ENCODE measurements at regions of chr5 and their contacts with region 1.

Region 1: GRCh38 chr5:176739461-176740051 is 70.8 kb upstream of the UNC5A start:
- DNase-seq: peak in 1 of 2 experiments; percentile 70
- H3K4me3 ChIP-seq: no peak overlapping the region
- H3K27ac ChIP-seq: no peak overlapping the region
- H3K4me1 ChIP-seq: peaks cover 7 to 33% (median 24%) of the 10 kb centered on the region in 4 experiments
- H3K27me3 ChIP-seq: peaks cover 0 to 25% (median 12%) of the 10 kb centered on the region in 4 experiments; a peak in 6 of 7 replicates
- CTCF ChIP-seq: no peak
- EP300 ChIP-seq: no peak
- POLR2A ChIP-seq: no peak
- RAD21 ChIP-seq: no peak

Region 2: DNA sequence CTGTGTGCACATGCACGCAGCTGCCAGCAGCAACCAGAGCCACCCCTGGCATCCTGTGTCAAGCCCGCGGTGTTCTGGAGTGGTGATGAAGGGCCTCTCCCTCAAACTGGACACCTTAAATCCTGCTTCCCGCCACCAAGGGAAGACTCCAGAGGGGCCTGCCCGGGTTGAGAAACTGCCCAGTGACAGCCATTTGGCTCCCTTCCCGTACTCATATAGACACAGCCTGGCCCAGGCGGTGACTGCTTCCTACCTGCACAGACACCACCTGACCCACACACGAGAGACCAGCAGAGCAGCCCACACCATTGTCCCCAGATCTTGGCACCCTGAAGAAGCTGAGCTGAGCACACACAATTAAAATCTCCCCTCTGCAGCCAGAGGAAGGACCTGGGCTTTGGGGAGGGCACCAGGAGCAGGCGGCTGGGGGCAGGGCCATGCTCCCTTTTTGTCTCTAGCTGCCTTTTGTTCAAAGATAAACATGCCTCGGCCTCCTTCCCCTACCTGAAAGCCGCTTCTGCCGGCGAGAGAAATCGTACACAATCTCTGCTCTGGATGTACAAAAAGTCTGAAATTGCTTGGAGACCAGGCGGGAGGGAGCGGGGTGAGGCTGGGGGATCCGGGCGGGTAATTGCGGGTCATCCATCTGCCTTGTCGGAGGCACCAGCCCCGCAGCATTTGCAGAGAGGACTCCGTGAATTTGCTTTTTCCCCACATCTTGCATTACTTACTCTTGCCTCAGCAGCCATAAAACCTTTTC is 13.9 kb before region 1 on chr5:
- CTCF ChIA-PET with region 1: interaction called, 54 read pairs
- POLR2A ChIA-PET with region 1: interaction called, 10 read pairs
- DNase-seq: peak in 1 of 2 experiments; percentile 57
- H3K4me3 ChIP-seq: no peak overlapping the region
- H3K27ac ChIP-seq: no peak overlapping the region
- H3K4me1 ChIP-seq: peaks cover 0 to 24% (median 10%) of the 10 kb centered on the region in 4 experiments; a peak in 5 of 7 replicates
- H3K27me3 ChIP-seq: peaks cover 0 to 6% (median 4%) of the 10 kb centered on the region in 4 experiments; a peak in 3 of 7 replicates
- CTCF ChIP-seq: no peak
- EP300 ChIP-seq: no peak
- POLR2A ChIP-seq: no peak
- RAD21 ChIP-seq: no peak

Region 3: DNA sequence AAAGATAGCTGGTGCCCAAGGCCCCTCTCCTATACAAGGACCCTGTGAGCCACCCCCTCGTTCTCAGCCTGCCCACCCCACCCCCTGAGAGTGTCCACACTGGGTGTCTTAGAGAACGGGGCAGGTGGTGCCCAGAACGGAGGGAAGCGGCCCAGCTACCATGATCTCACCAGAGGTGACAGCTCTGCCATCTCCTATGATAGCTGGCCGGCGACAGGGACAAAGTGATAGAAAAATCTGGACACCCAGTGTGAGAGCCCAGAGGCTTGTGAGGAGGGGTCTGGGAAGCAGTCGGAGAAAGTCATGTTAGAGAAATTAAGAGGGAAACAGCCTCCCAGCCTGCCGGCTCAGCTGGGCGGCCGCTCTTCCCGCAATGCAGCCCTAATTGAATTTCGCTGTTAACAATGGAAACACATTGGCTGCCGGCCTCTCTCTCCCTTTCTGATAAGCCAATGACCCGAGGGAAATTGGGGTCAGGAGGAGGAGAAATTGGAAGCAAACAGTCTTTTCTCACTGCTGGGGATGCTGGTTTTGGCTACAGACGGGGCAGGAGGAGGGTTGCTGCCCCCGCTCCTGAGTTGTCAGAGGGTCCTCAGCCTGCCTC is 127.3 kb after region 1 on chr5:
- CTCF ChIA-PET with region 1: no interaction called
- POLR2A ChIA-PET with region 1: no interaction called
- DNase-seq: no peak
- H3K4me3 ChIP-seq: no peak overlapping the region
- H3K27ac ChIP-seq: no peak overlapping the region
- H3K4me1 ChIP-seq: peaks cover 6 to 40% (median 27%) of the 10 kb centered on the region in 4 experiments
- H3K27me3 ChIP-seq: no peaks in the 10 kb centered on the region
- CTCF ChIP-seq: no peak; a peak in 1 of 4 replicates
- EP300 ChIP-seq: no peak
- POLR2A ChIP-seq: no peak
- RAD21 ChIP-seq: no peak

Measured in H1 (cell line).